ENCODE measurements at regions of chr16 and their contacts with region 1.

Region 1: DNA sequence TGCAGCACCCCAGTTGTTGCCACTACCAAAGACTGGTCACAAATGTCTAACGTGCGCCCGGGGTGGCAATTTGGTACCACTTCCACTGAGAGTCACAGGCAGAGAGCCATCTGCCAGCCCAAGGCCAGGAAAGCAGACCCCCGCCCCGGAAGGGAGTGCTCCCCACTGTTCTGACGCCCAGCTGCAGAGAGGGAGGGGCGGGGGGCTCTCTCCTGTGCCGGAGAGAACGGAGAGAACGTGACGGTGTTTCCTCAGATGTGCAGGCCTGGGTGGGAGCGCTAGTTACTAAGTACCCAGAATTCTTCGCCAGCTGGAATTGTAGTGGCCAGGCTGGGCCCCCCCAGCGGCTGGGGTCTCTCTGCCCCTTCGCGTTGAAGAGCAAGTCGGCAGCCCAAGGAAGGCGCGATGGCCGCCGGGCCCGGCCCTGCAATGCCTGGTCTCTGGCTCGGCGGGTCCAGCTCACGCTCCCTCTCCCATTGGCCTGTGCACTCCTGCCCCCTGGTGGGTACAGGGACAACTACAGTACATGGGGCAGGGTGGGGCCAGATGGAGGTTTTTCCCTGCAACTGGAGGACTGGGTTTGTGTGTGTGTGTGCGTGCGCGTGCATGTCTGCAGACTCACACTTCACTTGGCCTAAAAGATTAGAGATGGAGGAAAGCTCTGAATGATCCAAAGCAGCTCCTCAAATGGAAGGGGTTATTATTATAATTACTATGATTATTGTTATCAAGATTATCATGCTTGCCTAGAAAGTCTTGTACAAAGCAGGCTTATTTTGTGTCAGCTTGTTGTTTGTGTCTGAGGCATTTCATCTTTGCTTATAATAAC is 107.1 kb downstream of the AMFR start:
- H3K4me3 ChIP-seq: no peak overlapping the region
- H3K27ac ChIP-seq: no peak overlapping the region
- H3K4me1 ChIP-seq: no peaks in the 10 kb centered on the region
- CTCF ChIP-seq: peak; percentile 85

Region 2: GRCh38 chr16:55944377-55944802 is 373.8 kb before region 1 on chr16:
- CTCF ChIA-PET with region 1: interaction called, 38 read pairs
- POLR2A ChIA-PET with region 1: no interaction called
- H3K4me3 ChIP-seq: no peak overlapping the region
- H3K27ac ChIP-seq: no peak overlapping the region
- H3K4me1 ChIP-seq: peaks cover 15% of the 10 kb centered on the region
- CTCF ChIP-seq: peak; percentile 61

Region 3: GRCh38 chr16:56041686-56042085 is 276.5 kb before region 1 on chr16:
- CTCF ChIA-PET with region 1: interaction called, 10 read pairs
- POLR2A ChIA-PET with region 1: no interaction called
- H3K4me3 ChIP-seq: no peak overlapping the region
- H3K27ac ChIP-seq: no peak overlapping the region
- H3K4me1 ChIP-seq: no peaks in the 10 kb centered on the region
- CTCF ChIP-seq: peak; percentile 32; the same call in 1 of the 2 replicates

Region 4: DNA sequence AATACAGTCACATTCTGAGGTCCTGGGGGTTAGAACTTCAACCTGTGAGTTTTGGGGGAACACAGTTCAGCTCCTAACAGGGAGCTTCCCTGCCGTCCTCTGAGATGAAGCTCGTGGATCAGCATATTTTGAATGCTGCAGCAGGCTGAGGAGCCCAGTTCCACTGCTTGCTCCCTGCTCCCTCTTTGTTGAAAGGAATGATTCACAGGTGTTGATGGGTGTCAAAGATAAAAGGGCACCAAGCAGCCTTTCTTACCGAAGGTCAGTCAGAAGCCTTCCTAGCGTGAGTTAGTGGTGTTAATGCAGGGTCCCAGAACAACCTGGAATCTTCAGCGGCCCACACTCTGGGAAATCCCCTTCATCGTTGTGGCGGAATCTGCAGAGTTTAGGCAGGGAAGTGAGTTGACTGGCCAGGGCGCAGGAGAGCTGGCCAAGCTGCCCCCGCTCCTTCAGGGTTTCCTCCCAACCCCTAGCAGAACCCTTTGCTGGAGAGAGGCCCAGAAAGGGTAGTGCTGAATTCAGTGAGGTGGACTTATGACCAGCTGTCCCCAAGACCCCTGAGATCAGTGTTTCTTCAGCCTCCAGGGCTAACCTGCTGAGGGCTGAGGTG is 12.2 kb before region 1 on chr16:
- CTCF ChIA-PET with region 1: interaction called, 17 read pairs
- POLR2A ChIA-PET with region 1: no interaction called
- H3K4me3 ChIP-seq: no peak overlapping the region
- H3K27ac ChIP-seq: no peak overlapping the region
- H3K4me1 ChIP-seq: no peaks in the 10 kb centered on the region
- CTCF ChIP-seq: no peak

Region 5: GRCh38 chr16:56332464-56333079 is 14.4 kb after region 1 on chr16:
- CTCF ChIA-PET with region 1: interaction called, 10 read pairs
- POLR2A ChIA-PET with region 1: no interaction called
- H3K4me3 ChIP-seq: no peak overlapping the region
- H3K27ac ChIP-seq: no peak overlapping the region
- H3K4me1 ChIP-seq: no peaks in the 10 kb centered on the region
- CTCF ChIP-seq: no peak